ENCODE measurements at regions of chr16 and their contacts with region 1.

Region 1: GRCh38 chr16:85821441-85822135 is 22.1 kb downstream of the COX4I1 start:
- H3K4me3 ChIP-seq: no peak overlapping the region
- H3K27ac ChIP-seq: no peak overlapping the region
- H3K4me1 ChIP-seq: no peaks in the 10 kb centered on the region
- CTCF ChIP-seq: peak; percentile 97

Region 2: DNA sequence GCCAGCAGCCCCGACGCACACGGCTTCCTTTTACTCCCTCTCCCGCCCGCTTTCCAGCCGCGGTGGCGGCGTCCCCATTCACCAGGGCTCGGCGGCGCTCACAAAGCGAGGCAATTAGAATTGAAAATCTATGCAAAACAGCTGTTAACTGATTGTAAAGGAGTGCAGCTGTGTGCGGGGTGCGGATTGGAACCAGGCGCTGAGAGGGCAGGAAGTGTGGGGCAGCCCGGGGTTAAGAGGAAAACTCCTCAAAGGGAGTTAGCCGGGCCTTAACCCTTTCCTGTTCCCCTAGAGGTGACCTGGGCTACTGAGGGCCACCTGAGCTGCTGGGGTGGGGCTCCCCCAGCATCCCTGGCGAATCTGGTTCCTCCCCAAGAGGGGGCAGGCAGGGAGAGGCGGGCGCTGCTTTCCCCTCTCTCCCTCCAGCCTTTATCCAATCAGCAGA is 214.2 kb before region 1 on chr16:
- CTCF ChIA-PET with region 1: no interaction called
- POLR2A ChIA-PET with region 1: no interaction called
- H3K4me3 ChIP-seq: no peak overlapping the region
- H3K27ac ChIP-seq: no peak overlapping the region
- H3K4me1 ChIP-seq: peaks cover 2% of the 10 kb centered on the region; the same call in 1 of the 2 replicates
- CTCF ChIP-seq: no peak

Region 3: DNA sequence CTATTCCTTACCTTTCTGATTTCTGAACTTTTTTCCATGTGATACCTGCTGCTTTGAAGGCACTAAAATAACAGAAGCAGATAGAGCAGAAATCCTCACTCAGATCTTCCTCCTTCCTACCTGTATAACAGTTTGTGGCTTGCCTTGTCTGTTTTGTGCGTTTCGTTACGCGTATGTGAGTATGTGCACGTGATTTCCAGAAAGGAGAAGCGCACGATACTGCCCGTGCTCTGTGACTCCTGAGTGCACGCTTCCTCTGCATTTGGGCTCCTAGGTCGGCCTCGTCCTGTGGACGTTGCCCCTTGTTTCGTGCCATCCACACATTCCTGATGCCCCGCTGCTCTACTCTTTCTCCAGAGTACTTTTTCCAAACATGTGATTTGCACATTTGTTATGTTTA is 18.0 kb before region 1 on chr16:
- CTCF ChIA-PET with region 1: interaction called, 12 read pairs
- POLR2A ChIA-PET with region 1: no interaction called
- H3K4me3 ChIP-seq: no peak overlapping the region
- H3K27ac ChIP-seq: no peak overlapping the region
- H3K4me1 ChIP-seq: peaks cover 3% of the 10 kb centered on the region
- CTCF ChIP-seq: no peak

Region 4: GRCh38 chr16:85898521-85899442 is 77.2 kb after region 1 on chr16 and contains the start of gene IRF8:
- CTCF ChIA-PET with region 1: interaction called, 15 read pairs
- POLR2A ChIA-PET with region 1: interaction called, 3 read pairs
- H3K4me3 ChIP-seq: peak within 1 kb of the TSS; percentile 51
- H3K27ac ChIP-seq: peak within 1 kb of the TSS; percentile 40; the same call in 1 of the 2 replicates
- H3K4me1 ChIP-seq: no peaks in the 10 kb centered on the region; the same call in 1 of the 2 replicates
- CTCF ChIP-seq: no peak

Region 5: DNA sequence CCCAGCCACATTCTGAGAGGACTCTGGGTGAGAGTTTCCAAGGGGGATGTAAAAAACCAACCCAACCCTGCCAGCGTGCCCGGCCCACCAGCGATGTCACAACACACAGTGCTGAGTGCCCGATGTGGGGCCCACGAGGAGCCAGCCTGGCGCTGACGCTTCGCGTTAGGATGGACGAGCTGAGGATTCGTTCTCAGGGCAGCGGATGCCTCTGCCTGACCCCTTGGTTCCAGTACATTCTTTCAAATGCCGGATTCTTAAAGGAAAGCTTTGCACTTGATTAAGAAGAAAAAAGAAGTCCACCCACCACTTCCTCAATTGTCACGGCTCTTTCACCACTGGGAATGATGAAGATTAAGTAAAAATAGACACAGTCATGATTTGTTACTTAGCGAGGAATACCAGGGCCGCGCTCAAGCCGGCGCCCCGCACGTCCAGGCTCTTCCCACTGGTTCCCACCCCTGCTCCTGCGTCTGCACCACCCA is 156.7 kb after region 1 on chr16:
- CTCF ChIA-PET with region 1: interaction called, 53 read pairs
- POLR2A ChIA-PET with region 1: no interaction called
- H3K4me3 ChIP-seq: no peak overlapping the region
- H3K27ac ChIP-seq: no peak overlapping the region
- H3K4me1 ChIP-seq: no peaks in the 10 kb centered on the region
- CTCF ChIP-seq: no peak

Region 6: GRCh38 chr16:85986931-85987749 is 165.6 kb after region 1 on chr16:
- CTCF ChIA-PET with region 1: interaction called, 292 read pairs
- POLR2A ChIA-PET with region 1: interaction called, 4 read pairs
- H3K4me3 ChIP-seq: no peak overlapping the region
- H3K27ac ChIP-seq: no peak overlapping the region
- H3K4me1 ChIP-seq: peaks cover 3% of the 10 kb centered on the region; the same call in 1 of the 2 replicates
- CTCF ChIP-seq: no peak

Region 7: GRCh38 chr16:86002178-86002900 is 180.8 kb after region 1 on chr16:
- CTCF ChIA-PET with region 1: interaction called, 292 read pairs
- POLR2A ChIA-PET with region 1: no interaction called
- H3K4me3 ChIP-seq: no peak overlapping the region
- H3K27ac ChIP-seq: no peak overlapping the region
- H3K4me1 ChIP-seq: no peaks in the 10 kb centered on the region
- CTCF ChIP-seq: no peak

Region 8: DNA sequence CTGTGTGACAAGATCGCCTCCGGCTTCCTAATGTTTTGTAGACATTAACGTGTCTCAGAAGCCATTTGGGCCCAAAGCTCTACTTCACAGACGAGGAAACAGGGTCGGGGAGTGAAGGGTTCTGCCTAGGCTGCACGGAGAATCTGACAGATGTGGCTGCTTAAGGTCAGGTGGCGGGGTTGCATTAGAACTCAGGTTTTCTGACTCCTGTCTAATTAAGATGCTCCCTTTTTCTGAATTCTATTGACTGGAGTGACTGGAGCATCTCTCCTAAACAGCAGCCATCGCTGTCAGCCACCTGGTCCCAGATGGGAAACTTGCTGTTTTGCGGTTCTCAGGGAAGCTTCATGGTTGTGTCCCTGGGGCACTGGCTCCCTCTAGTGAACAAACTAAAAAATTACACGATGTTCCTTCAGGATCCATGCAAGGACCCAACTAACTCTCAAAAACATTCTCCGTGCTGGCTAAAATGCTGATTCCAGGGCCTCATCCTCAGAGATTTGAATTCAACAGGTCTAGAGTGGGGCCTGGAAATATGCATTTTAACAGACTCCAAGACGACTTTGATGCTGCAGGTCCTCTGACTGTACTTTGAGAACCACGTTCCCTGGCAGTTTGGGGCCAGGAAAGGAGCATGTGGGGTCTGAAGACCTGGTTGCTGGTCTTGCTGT is 194.7 kb after region 1 on chr16:
- CTCF ChIA-PET with region 1: interaction called, 150 read pairs
- POLR2A ChIA-PET with region 1: interaction called, 3 read pairs
- H3K4me3 ChIP-seq: no peak overlapping the region
- H3K27ac ChIP-seq: no peak overlapping the region
- H3K4me1 ChIP-seq: no peaks in the 10 kb centered on the region
- CTCF ChIP-seq: peak; percentile 48; the same call in 1 of the 2 replicates

Measured in HEK293 (cell line).